Right cardiac atrium (tissue), 5 donors: ENCODE measurements at regions of chr12 and their contacts with region 1.

Region 1: DNA sequence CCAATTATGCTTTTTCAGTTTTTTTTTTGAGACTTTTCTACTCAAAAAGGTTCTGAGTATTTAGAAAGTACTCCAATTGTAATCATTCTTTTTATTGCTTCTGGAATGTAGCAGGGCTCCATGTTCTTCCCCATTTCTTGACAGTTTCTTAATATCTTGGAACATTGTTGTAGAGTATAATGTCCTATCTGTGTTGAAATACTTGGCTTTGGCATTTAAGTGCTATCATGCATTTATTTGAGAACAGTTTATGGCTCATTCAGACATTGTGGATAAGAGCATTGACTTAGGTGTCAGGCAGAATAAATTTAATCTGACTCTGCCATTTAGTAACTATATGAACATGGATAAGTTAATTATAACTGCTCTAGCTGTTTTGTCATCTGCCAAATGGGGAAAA is 28.3 kb downstream of the ADIPOR2 start:
- DNase-seq: no peak
- ATAC-seq: peak; percentile 66 to 85
- H3K4me3 ChIP-seq: no peak overlapping the region
- H3K27ac ChIP-seq: no peak overlapping the region
- H3K4me1 ChIP-seq: peaks cover 8% of the 10 kb centered on the region
- H3K27me3 ChIP-seq: no peaks in the 10 kb centered on the region

Region 2: GRCh38 chr12:1680804-1681492 is 38.2 kb before region 1 on chr12:
- intact Hi-C with region 1: no loop called
- DNase-seq: no peak
- ATAC-seq: peak; percentile 78 to 97
- H3K4me3 ChIP-seq: no peak overlapping the region
- H3K27ac ChIP-seq: peak overlapping the region; percentile 68
- H3K4me1 ChIP-seq: peaks cover 2% of the 10 kb centered on the region
- H3K27me3 ChIP-seq: no peaks in the 10 kb centered on the region

Region 3: GRCh38 chr12:1776170-1776948 is 57.2 kb after region 1 on chr12:
- intact Hi-C with region 1: loop called in 1 of 4 experiments (anchors 10 kb)
- DNase-seq: no peak
- ATAC-seq: peak in 1 of 2 donors; percentile 46
- H3K4me3 ChIP-seq: no peak overlapping the region
- H3K27ac ChIP-seq: peak overlapping the region; percentile 52
- H3K4me1 ChIP-seq: peaks cover 13% of the 10 kb centered on the region
- H3K27me3 ChIP-seq: no peaks in the 10 kb centered on the region